GM18951 (cell line): ENCODE measurements at regions of chr5 and their contacts with region 1.

Region 1: DNA sequence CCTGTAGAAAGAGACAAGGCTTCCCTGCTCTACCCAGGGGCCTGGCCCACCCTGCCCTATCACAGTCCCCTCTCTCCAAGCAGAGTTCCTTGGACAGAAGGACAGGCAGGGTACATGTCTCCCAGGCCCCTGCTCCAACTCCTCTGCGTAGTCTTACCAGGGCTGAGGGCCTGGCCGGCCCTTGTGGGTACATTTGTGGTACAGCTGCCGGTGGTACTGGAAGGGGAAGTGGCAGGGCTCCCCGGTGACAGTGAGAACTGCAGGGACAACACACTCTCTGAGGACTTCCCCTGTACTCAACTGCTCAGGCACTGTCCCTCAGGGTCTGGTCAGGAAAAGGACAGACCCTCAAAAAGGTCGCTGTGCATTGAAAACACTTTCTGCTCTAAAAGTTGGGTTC is 3.6 kb downstream of the F12 start:
- POLR2A ChIP-seq: no peak

Region 2: GRCh38 chr5:177454397-177455035 is 48.7 kb after region 1 on chr5:
- in situ Hi-C with region 1: loop called (anchors 5 kb)
- POLR2A ChIP-seq: peak; percentile 18